ENCODE measurements at regions of chrX and their contacts with region 1.

Region 1: GRCh38 chrX:48972220-48973167 is 850 bp upstream of the KCND1 start:
- DNase-seq: peak; percentile 54 to 60
- ATAC-seq: peak; percentile 72 to 88
- H3K4me3 ChIP-seq: peak overlapping the region; percentile 0; the same call in 1 of the 3 replicates
- H3K27ac ChIP-seq: peak overlapping the region in 1 of 2 experiments; percentile 70; a peak in 3 of 6 replicates
- H3K4me1 ChIP-seq: peaks cover 11% of the 10 kb centered on the region
- CTCF ChIP-seq: peak; percentile 60
- EP300 ChIP-seq: no peak
- POLR2A ChIP-seq: no peak
- RAD21 ChIP-seq: peak; percentile 35 to 40; a peak in 4 of 5 replicates

Region 2: GRCh38 chrX:48989483-48989882 is 17.0 kb after region 1 on chrX:
- CTCF ChIA-PET with region 1: interaction called, 14 read pairs
- POLR2A ChIA-PET with region 1: no interaction called
- DNase-seq: no peak
- ATAC-seq: no peak
- H3K4me3 ChIP-seq: no peak overlapping the region
- H3K27ac ChIP-seq: no peak overlapping the region
- H3K4me1 ChIP-seq: no peaks in the 10 kb centered on the region
- CTCF ChIP-seq: no peak
- EP300 ChIP-seq: no peak
- POLR2A ChIP-seq: no peak
- RAD21 ChIP-seq: no peak